ENCODE measurements at regions of chr6 and their contacts with region 1.

Region 1: DNA sequence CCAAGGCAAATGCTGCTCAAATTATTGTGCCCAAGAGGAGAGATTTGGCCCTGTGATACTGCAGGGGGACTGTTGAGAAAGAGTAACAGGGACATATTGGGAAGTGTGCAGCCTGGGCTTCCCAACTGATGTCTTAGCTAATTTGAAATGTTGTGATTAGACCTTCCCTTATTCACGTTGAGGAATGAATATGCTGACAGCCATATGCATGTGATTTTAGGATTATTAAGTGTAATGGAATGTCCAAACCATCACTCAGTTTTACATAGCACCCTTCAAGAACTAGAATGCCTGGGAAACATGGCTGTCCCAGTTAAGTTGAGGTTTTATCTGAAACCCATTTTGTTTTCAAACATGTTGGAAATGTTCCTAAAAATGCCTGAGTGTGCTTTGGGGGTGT is 81.4 kb downstream of the CARMIL1 start:
- DNase-seq: no peak
- ATAC-seq: no peak

Region 2: DNA sequence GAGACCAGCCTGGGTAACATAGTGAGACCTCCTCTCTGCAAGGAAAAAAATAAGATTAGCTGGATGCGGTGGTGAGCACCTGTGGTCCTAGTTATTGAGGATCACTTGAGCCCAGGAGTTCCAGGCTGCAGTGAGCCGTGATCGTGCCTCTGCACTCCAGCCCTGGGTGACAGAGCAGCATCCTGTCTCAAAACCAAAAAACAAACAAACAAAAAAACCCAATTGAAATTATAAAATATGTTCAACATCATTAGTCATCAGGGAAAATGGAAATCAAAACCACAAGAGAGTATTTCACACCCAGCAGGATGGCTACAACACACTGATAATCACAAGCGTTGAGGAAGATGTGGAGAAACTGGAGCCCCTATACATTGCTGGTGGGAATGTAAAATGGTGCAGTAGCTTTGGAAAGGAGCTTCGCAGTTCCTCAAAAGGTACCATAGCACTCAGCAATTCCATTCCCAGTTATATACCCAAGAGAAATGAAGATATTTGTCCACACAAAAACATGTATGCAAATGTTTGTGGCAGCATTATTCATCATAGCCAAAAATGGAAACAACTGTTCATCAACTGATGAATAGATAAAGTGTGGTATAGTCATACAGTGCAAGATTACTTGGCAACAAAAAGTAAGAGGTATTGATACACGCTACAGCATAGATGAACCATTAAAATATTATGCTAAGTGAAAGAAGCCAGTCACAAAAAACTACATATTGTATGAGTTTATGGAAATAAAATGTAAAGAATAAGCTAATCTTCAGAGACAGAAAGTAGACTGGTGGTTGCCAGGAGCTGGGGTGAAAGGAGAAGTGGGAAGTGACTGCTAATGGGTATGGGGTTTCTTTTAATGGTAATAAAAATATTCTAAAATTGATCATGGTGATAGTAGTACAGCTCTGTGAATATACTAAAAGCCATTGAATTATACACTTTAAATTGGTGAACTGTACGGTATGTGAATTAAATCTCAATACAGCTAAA is 386.1 kb before region 1 on chr6:
- intact Hi-C with region 1: no loop called
- DNase-seq: no peak
- ATAC-seq: no peak

Region 3: DNA sequence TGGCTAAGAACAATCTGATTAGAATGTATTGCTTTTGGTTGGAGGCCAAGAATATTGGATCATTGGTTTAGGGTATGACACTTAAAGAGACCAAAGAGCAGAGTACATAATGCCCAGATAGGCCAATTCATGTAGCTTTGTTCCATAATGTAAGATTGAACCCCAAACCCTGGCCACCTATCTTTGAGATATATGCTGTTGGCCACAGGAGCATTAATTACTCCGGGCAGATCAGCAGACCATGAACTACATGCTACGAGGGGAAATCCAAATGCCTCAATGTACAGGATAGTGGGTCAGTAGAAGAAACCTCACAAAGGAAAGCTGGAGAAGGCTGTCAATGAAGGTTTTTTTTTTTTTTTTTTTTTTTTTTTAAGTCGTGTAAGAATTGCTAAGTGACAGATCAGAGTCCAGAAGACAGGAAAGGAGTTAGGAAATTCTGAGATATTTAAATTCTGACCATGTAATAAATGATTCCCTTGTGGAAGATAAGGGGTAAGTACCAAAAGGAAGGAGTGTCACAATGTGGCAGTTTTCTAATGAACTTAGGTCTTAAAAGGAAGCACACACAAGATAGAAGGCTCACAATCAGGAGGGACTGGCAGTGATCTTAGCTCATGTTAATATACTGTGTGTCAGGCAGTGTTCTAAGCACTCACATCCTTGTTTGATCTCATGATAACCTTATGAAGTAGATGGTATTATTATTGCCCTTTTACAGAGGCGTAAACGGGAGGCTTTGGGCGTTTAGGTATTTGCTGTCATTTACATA is 20.0 kb before region 1 on chr6:
- intact Hi-C with region 1: loop called (anchors 1 kb)
- DNase-seq: no peak
- ATAC-seq: no peak